ENCODE measurements at regions of chr19 and their contacts with region 1.

Region 1: GRCh38 chr19:17859533-17860330 is at the start of gene RPL18A:
- DNase-seq: peak; percentile 100
- H3K4me3 Mint-ChIP-seq: peak within 1 kb of the TSS; percentile 98
- H3K27ac Mint-ChIP-seq: peak within 1 kb of the TSS; percentile 99
- H3K4me1 Mint-ChIP-seq: peaks cover 18% of the 10 kb centered on the region
- H3K27me3 Mint-ChIP-seq: no peaks in the 10 kb centered on the region
- CTCF ChIP-seq: peak; percentile 69
- total RNA-seq, gene RPL18A: 3,250 and 3,372 TPM in 2 replicates

Region 2: DNA sequence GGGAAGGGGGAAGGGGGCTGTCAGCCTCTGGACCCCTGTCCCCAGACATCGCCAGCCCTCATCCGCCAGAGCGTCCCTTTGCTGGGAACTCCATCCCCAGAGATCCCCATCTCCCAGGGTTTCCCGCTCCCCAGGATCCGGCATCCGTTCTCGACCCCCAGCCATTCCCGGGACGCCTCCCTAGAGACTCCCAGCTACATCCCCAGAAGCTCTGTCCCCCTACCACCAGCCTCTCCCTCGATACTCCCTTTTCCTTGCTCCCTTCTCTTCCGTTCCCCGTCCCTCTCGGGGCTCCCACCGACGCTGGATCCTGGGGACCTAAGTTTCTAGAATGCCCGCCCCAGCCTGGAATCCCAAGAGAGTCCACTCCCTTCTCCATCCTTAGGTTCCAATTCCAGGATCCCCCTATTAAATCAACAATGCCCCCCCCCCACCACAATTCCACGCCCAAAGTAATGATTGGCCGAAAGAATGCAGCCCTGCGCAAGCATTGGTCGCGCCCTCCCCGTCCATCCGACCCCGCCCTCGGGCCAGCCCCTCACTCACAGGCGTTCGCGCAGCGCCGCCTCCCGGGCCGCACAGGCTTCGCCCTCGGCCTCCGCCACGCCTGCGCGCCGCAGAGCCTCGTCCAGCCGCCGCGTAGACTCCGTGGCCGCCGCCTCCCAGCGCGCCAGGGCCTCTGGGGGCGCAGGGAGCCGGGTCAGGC is 468.9 kb before region 1 on chr19:
- CTCF ChIA-PET with region 1: no interaction called
- POLR2A ChIA-PET with region 1: no interaction called
- intact Hi-C with region 1: loop called (anchors 10 kb)
- DNase-seq: peak; percentile 94
- H3K4me3 Mint-ChIP-seq: peak overlapping the region; percentile 77
- H3K27ac Mint-ChIP-seq: no peak overlapping the region
- H3K4me1 Mint-ChIP-seq: peaks cover 10% of the 10 kb centered on the region
- H3K27me3 Mint-ChIP-seq: no peaks in the 10 kb centered on the region
- CTCF ChIP-seq: peak; percentile 67

Region 3: GRCh38 chr19:17496337-17496997 is 363.3 kb before region 1 on chr19:
- CTCF ChIA-PET with region 1: interaction called, 7 read pairs
- POLR2A ChIA-PET with region 1: interaction called, 4 read pairs
- intact Hi-C with region 1: loop called (anchors 5 kb)
- DNase-seq: peak; percentile 86
- H3K4me3 Mint-ChIP-seq: no peak overlapping the region
- H3K27ac Mint-ChIP-seq: no peak overlapping the region
- H3K4me1 Mint-ChIP-seq: peaks cover 15% of the 10 kb centered on the region
- H3K27me3 Mint-ChIP-seq: no peaks in the 10 kb centered on the region
- CTCF ChIP-seq: peak; percentile 90

Region 4: GRCh38 chr19:17766543-17767131 is 93.1 kb before region 1 on chr19:
- CTCF ChIA-PET with region 1: interaction called, 9 read pairs
- POLR2A ChIA-PET with region 1: interaction called, 5 read pairs
- intact Hi-C with region 1: loop called (anchors 5 kb)
- DNase-seq: peak; percentile 95
- H3K4me3 Mint-ChIP-seq: peak overlapping the region; percentile 70
- H3K27ac Mint-ChIP-seq: peak overlapping the region; percentile 50
- H3K4me1 Mint-ChIP-seq: peaks cover 14% of the 10 kb centered on the region
- H3K27me3 Mint-ChIP-seq: no peaks in the 10 kb centered on the region
- CTCF ChIP-seq: peak; percentile 92

Region 5: DNA sequence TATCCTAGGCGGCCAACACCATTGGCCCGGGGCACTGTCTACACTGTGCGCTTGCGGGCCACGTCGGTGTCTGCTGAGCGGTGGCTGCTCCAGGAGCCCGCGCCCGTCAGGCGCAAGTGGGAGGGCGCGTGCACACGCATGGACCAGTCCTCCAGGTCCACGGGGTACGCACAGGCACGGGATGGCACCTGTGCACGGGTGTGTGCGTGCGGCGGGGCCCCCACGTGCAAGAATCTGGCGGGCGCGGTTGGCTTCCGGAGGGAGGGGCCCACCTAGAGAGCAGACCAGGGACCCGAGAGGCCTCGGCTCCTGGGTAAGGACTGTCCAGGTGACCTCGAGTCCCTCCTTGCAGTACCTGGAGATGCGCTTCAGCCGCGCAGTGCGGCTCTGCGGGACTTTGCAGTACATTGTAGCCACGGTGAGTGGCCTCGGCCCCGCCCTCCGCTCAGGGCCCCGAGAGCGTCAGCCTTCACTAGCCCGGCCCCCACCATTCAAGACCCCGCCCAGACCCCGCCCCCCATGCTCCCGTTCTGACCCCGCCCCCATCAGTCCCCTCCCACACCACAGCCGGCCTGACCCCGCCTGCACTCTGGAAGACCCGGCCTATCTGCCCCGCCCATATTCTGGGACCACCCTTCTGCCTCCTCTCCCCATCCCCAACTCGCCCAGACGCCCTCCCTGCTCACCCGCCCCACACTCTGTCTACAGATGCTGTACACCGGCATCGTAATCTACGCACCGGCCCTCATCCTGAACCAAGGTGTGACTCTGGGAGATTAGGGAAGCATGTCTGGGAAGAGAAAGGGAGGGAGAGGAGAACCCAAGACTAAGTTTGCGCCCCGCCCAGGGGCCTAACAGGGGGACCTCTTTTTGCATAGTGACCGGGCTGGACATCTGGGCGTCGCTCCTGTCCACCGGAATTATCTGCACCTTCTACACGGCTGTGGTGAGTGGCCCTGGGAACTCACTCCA is 14.3 kb after region 1 on chr19:
- CTCF ChIA-PET with region 1: interaction called, 37 read pairs
- POLR2A ChIA-PET with region 1: interaction called, 17 read pairs
- intact Hi-C with region 1: no loop called
- DNase-seq: peak; percentile 48
- H3K4me3 Mint-ChIP-seq: no peak overlapping the region
- H3K27ac Mint-ChIP-seq: no peak overlapping the region
- H3K4me1 Mint-ChIP-seq: no peaks in the 10 kb centered on the region
- H3K27me3 Mint-ChIP-seq: no peaks in the 10 kb centered on the region
- CTCF ChIP-seq: no peak

Region 6: GRCh38 chr19:17932485-17933338 is 73.0 kb after region 1 on chr19 and contains the start of gene CCDC124:
- CTCF ChIA-PET with region 1: interaction called, 58 read pairs
- POLR2A ChIA-PET with region 1: interaction called, 223 read pairs
- intact Hi-C with region 1: loop called (anchors 1 kb)
- DNase-seq: peak; percentile 94
- H3K4me3 Mint-ChIP-seq: peak within 1 kb of the TSS; percentile 95
- H3K27ac Mint-ChIP-seq: peak within 1 kb of the TSS; percentile 99
- H3K4me1 Mint-ChIP-seq: peaks cover 6% of the 10 kb centered on the region
- H3K27me3 Mint-ChIP-seq: no peaks in the 10 kb centered on the region
- CTCF ChIP-seq: peak; percentile 98
- total RNA-seq, gene CCDC124: 122 and 131 TPM in 2 replicates

Region 7: DNA sequence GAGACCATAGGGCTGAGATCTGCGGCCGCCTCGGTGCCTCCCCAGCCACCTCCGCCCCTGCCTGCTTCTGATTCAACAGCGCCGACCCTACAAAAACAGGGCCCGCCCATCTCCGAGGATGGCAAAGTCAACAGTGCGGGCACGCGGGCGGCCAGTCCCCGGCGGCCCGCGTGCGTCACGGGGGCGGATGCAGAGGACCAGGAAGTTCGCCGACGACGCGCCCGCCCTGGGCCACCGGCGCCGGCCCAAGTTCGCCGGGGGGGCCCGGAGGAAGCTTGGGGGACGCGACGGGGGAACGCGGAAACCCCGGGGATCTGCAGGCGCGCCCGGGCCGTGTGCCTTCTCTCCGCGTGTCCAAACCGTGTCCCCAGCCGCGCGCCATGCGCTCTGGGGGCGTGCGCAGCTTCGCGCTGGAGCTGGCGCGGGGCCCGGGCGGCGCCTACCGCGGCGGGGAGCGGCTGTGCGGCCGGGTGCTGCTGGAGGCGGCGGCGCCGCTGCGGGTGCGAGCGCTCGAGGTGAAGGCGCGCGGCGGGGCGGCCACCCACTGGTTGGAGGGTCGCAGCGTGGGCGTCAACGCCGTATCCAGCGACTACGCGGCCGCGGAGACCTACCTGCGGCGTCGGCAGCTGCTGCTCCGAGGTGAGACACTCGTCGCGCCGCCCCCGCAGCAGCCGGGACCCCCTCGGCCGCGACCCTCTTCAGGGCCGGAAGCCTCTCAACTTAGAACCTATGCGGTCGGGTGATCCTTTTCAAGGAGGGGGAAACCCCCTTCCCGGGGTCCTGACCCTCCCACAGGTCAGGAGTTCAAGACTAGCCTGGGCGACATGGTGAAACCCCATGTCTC is 141.4 kb after region 1 on chr19:
- CTCF ChIA-PET with region 1: interaction called, 6 read pairs
- POLR2A ChIA-PET with region 1: interaction called, 4 read pairs
- intact Hi-C with region 1: loop called (anchors 5 kb)
- DNase-seq: peak; percentile 88
- H3K4me3 Mint-ChIP-seq: peak overlapping the region; percentile 77
- H3K27ac Mint-ChIP-seq: peak overlapping the region; percentile 94
- H3K4me1 Mint-ChIP-seq: peaks cover 6% of the 10 kb centered on the region
- H3K27me3 Mint-ChIP-seq: no peaks in the 10 kb centered on the region
- CTCF ChIP-seq: no peak

Measured in MCF 10A (cell line).